Activated T-helper 1 cell treated with anti-CD3 and anti-CD28 coated beads, Interleukin-12 subunit alpha, Interleukin-12 subunit beta, Interleukin-2, Interleukin-4 antibody, amounts not matched to agents 30 ng/mL and 10 ng/mL and 1 ng/mL, durations not matched to agents 14 hours and 24 hours and 36 hours (primary cell): ENCODE measurements at regions of chr2 and their contacts with region 1.

Region 1: GRCh38 chr2:71068218-71069035 is at the start of gene NAGK:
- DNase-seq: peak; percentile 98
- H3K4me3 Mint-ChIP-seq: peak within 1 kb of the TSS; percentile 93
- H3K27ac Mint-ChIP-seq: peak within 1 kb of the TSS; percentile 97
- H3K4me1 Mint-ChIP-seq: peaks cover 55% of the 10 kb centered on the region
- H3K27me3 Mint-ChIP-seq: no peaks in the 10 kb centered on the region
- total RNA-seq, gene NAGK: 75.2 and 83.2 TPM in 2 replicates

Region 2: DNA sequence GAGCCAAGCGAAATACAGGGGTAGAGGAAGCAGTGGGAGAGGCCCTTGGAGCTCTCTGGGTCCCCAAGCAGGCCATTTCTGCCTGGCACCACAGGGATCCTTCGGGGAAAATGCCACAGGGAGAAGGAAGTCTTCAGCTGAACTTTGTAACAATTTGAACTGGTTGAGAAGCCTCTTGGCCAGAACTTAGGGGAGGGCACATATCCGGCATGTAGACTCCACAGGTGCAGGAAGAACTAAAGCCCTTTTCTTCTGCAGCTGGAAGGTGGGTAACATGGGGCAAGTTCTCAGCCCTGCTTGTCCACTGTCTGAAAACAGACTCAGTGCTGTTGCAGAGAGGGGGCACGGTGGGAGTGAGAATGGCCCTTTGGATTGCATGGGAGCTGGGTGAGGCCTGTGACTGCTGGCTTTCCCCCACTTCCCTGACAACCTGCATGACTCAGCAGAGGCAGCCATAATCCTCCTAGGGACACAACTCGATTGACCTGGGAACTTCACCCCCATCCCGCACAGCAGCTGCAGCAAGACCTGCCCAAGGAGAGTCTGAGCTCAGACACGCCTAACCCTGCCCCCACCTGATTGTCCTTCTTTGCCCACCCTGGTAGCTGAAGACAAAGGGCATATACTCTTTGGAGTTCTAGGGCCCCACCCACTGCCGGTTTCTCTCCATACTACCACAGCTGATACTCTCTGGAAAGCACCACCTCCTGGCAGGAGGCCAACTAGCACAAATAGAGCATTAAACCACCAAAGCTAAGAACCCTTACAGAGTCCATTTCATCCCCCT is 665.0 kb before region 1 on chr2:
- intact Hi-C with region 1: no loop called
- DNase-seq: no peak
- H3K4me3 Mint-ChIP-seq: no peak overlapping the region
- H3K27ac Mint-ChIP-seq: no peak overlapping the region
- H3K4me1 Mint-ChIP-seq: no peaks in the 10 kb centered on the region
- H3K27me3 Mint-ChIP-seq: peaks cover 12% of the 10 kb centered on the region

Region 3: GRCh38 chr2:70994756-70995729 is 73.4 kb before region 1 on chr2 and contains the start of gene TEX261:
- intact Hi-C with region 1: loop called (anchors 2 kb)
- DNase-seq: peak; percentile 90
- H3K4me3 Mint-ChIP-seq: peak within 1 kb of the TSS; percentile 99
- H3K27ac Mint-ChIP-seq: peak within 1 kb of the TSS; percentile 92
- H3K4me1 Mint-ChIP-seq: peaks cover 45% of the 10 kb centered on the region
- H3K27me3 Mint-ChIP-seq: peaks cover 4% of the 10 kb centered on the region
- total RNA-seq, gene TEX261: 89.4 and 97.4 TPM in 2 replicates

Region 4: DNA sequence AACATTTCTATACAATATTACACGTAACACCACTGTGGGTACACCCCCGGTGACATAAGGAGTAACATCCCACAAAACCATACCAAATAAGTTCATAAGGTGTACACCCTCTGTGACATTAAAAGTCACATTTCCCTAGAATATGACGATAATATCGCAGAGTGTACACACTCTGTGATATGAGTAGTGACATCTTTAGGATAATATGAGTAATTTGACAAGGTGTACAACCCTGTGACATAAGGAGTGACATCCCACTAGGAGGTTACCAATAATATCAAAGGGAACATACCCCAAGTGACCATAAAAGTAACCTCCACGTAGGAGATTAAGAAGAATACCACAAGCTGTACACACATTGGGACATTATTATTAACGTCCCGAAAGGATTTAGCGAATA is 49.8 kb before region 1 on chr2:
- intact Hi-C with region 1: loop called (anchors 1 kb)
- DNase-seq: no peak
- H3K4me3 Mint-ChIP-seq: no peak overlapping the region
- H3K27ac Mint-ChIP-seq: no peak overlapping the region
- H3K4me1 Mint-ChIP-seq: peaks cover 7% of the 10 kb centered on the region
- H3K27me3 Mint-ChIP-seq: no peaks in the 10 kb centered on the region

Region 5: DNA sequence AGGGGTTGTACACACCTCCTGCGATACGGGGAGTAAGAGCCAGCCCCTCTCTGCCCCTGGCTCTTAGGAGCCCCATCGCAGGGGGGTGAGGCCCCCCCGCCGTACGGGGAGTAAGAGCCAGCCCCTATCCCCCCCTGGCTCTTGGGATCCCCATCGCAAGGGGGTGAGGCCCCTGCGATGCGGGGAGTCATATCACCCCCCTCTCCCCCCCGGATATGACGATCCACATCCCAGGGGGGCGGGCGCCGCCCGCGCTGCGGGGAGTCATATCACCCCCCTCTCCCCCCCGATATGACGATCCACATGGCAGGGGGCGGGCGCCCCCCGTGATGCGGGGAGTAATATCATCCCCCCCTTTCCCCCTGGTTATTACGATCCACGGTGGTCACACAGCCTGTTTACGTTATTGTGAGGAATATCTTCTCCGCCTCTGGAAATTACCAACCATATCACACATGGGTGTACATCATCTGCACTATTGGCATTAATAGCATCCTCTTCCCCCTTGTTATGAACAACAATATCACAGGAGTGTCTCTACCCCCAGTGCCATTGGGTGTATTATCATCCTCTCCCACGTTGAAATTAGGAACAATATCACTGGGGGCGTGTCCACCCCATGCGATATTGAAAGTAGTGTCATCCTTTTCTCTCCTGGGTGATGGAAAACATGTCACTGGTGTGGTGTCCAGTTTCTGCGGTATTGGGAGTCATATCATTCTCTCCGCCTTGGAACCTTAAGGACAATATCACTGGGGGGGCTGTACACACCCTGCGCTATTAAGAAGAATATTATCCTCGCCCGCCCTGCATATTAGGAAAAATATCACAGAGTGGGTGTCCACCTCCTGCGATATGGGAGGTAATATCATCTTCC is 24.7 kb before region 1 on chr2:
- intact Hi-C with region 1: loop called (anchors 1 kb)
- DNase-seq: no peak
- H3K4me3 Mint-ChIP-seq: no peak overlapping the region
- H3K27ac Mint-ChIP-seq: no peak overlapping the region
- H3K4me1 Mint-ChIP-seq: no peaks in the 10 kb centered on the region
- H3K27me3 Mint-ChIP-seq: peaks cover 2% of the 10 kb centered on the region

Region 6: GRCh38 chr2:71049365-71050360 is 18.8 kb before region 1 on chr2:
- intact Hi-C with region 1: loop called (anchors 1 kb)
- DNase-seq: peak; percentile 22
- H3K4me3 Mint-ChIP-seq: no peak overlapping the region
- H3K27ac Mint-ChIP-seq: no peak overlapping the region
- H3K4me1 Mint-ChIP-seq: peaks cover 14% of the 10 kb centered on the region
- H3K27me3 Mint-ChIP-seq: peaks cover 4% of the 10 kb centered on the region

Region 7: DNA sequence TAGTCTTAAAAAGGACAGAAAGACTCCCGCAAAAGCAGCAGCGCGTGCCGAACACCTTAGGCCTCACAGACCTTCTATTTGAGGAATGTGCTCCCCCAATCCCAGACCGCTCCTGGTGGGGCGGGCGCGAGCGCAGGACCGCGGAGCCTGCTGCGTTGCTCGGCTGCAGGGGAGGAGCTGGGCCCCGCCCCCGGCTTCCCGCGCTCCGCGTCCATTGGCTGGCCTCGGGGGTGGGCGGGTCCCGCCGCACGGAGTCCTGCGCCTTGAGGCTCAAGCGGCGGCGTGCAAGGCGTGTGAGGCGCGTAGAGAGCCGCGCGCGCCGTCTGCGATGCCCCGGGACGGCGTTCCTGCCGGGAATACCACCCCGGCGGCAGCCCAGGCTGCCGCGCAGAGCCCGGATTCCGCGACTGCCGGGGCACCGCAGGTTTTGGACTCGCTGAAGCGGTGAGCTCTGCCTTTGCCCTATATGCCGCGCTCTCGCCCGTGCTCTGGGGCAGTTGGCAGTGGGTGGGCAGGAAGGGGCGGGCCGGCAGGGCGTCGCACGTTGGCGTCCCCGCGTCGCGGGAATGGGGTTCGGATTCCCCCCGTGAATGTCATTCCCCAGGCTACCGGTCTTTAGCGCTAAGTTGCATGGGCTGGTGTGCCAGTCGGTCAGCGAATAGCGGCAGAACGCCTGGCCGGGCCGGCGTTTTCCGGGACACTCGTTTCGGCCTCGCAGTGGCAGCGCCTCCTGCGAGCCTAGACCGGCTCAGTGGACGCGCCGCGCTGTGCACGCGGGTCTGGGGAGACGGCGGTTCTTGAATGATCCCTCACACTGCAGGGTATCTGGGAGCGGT is 208.1 kb after region 1 on chr2:
- intact Hi-C with region 1: loop called (anchors 10 kb)
- DNase-seq: peak; percentile 88
- H3K4me3 Mint-ChIP-seq: peak overlapping the region; percentile 76
- H3K27ac Mint-ChIP-seq: no peak overlapping the region
- H3K4me1 Mint-ChIP-seq: peaks cover 8% of the 10 kb centered on the region
- H3K27me3 Mint-ChIP-seq: peaks cover 69% of the 10 kb centered on the region

Region 8: GRCh38 chr2:71331581-71332434 is 263.4 kb after region 1 on chr2 and contains the start of gene ZNF638:
- intact Hi-C with region 1: loop called (anchors 1 kb)
- DNase-seq: peak; percentile 90
- H3K4me3 Mint-ChIP-seq: peak within 1 kb of the TSS; percentile 99
- H3K27ac Mint-ChIP-seq: peak within 1 kb of the TSS; percentile 100
- H3K4me1 Mint-ChIP-seq: peaks cover 27% of the 10 kb centered on the region
- H3K27me3 Mint-ChIP-seq: peaks cover 6% of the 10 kb centered on the region
- total RNA-seq, gene ZNF638: 88.8 and 96.8 TPM in 2 replicates